PC-9 (cell line): ENCODE measurements at regions of chr14 and their contacts with region 1.

Region 1: DNA sequence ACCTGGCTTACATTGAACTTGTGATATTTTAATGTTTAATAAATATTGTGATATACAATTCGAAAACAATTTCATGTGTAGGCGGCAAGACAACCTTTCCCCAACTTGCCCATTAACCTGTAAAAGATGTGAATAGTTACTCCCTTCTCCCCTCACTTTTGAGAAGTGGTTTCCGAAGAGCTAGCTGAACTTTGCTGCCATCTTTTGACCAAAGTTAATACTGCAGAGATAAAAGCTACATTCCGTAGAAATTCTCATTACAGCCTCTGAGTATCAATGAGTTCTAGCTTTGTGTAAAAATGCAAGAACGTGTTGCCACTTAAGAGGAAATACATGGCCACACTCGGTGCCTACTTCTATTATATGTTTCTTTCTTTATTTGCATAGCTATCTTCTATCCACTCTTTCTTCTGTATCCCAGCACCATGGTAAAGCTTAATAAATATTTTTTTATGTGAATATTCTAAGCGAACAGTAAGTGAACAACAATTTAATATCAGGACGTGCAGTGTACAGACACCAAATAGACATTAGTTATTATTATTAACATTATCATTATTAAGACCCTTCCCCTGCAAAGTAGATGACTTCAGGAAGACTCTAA is 105.1 kb upstream of the TMEM260 start:
- DNase-seq: peak in 1 of 2 experiments; percentile 37
- H3K4me3 ChIP-seq: no peak overlapping the region
- H3K27ac ChIP-seq: no peak overlapping the region
- H3K4me1 ChIP-seq: no peaks in the 10 kb centered on the region
- H3K27me3 ChIP-seq: no peaks in the 10 kb centered on the region
- CTCF ChIP-seq: peak; percentile 83

Region 2: DNA sequence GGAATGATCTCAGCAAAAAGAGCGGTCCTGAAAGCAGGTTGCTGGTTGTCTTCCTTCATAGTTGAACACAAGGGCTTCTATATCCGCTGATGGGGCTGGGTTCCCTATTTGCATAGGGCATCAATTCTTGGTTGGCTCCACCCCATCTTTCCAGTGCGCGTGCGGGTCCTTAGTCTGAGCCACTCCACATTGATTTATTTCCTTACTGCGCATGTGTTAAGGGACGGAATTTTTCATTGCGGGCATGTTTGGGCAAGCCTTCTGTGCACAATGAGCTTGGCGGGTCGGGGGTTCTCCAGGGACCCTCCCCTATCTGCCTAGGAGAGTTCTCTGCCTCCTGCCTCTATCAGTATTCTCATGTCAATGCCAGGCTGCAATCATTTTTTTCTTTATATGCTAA is 1261.9 kb before region 1 on chr14:
- CTCF ChIA-PET with region 1: interaction called, 5 read pairs
- POLR2A ChIA-PET with region 1: no interaction called
- intact Hi-C with region 1: loop called (anchors 2 kb)
- DNase-seq: no peak
- H3K4me3 ChIP-seq: no peak overlapping the region
- H3K27ac ChIP-seq: no peak overlapping the region
- H3K4me1 ChIP-seq: no peaks in the 10 kb centered on the region
- H3K27me3 ChIP-seq: no peaks in the 10 kb centered on the region
- CTCF ChIP-seq: no peak

Region 3: DNA sequence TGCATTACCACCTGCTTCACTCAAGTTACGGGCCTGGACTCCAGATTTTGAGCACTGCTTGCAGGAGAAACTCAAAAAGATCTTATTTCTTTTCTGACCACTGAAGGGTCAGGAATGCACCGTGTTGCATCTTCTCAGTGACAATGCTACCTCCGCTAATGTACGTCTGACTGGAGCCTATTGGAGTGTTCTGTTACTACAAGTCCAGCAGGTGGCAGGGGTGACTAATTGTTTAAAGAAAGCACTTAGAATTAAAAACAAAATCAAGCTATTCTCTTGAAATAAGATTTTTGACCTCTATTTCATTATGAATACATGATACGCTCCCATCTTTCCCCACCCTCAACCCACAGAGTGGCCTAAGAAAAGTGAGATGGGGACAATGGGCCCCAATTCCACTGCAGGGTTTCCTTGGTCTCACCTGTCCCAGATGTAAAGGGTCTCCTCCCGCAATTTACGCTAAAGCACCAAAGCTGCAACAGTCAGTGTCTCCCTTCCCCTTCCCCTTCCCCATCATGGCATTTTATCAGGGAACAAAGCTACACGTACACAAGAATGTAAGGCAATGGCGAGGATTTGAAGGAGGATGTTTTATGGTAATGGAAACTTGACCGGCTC is 1036.3 kb before region 1 on chr14:
- CTCF ChIA-PET with region 1: interaction called, 7 read pairs
- POLR2A ChIA-PET with region 1: no interaction called
- intact Hi-C with region 1: loop called (anchors 1 kb)
- DNase-seq: peak in 1 of 2 experiments; percentile 66
- H3K4me3 ChIP-seq: no peak overlapping the region
- H3K27ac ChIP-seq: no peak overlapping the region
- H3K4me1 ChIP-seq: peaks cover 20% of the 10 kb centered on the region
- H3K27me3 ChIP-seq: no peaks in the 10 kb centered on the region
- CTCF ChIP-seq: peak; percentile 76

Region 4: GRCh38 chr14:55707365-55707804 is 767.1 kb before region 1 on chr14:
- CTCF ChIA-PET with region 1: no interaction called
- POLR2A ChIA-PET with region 1: no interaction called
- intact Hi-C with region 1: loop called (anchors 2 kb)
- DNase-seq: peak in 1 of 2 experiments; percentile 60
- H3K4me3 ChIP-seq: no peak overlapping the region
- H3K27ac ChIP-seq: no peak overlapping the region
- H3K4me1 ChIP-seq: no peaks in the 10 kb centered on the region
- H3K27me3 ChIP-seq: no peaks in the 10 kb centered on the region
- CTCF ChIP-seq: peak; percentile 81

Region 5: DNA sequence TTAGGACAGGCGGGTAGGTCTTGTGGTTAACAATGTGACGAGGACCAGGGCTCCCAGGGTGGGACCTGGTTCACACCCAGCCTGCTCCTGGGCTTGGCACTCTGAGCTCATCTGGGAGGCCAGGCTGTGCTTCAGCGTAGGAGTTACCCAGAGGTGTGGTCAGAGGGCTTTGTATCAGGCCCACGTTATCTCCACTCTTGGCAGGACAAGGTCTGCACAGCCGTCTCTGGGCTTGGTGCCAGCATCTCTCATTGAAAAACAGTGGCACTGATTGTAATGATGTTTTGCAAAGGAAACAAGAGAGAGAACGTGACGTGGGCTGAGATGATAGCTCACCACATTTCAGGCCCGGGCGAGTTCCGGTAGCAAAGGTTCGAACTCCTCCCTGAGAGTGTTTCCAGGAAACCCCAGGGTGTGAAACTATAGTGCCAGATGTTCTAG is 667.4 kb before region 1 on chr14:
- CTCF ChIA-PET with region 1: no interaction called
- POLR2A ChIA-PET with region 1: no interaction called
- intact Hi-C with region 1: loop called (anchors 10 kb)
- DNase-seq: peak; percentile 49 to 83
- H3K4me3 ChIP-seq: no peak overlapping the region
- H3K27ac ChIP-seq: no peak overlapping the region
- H3K4me1 ChIP-seq: peaks cover 23% of the 10 kb centered on the region
- H3K27me3 ChIP-seq: no peaks in the 10 kb centered on the region
- CTCF ChIP-seq: no peak

Region 6: GRCh38 chr14:56057071-56057741 is 417.3 kb before region 1 on chr14:
- CTCF ChIA-PET with region 1: interaction called, 16 read pairs
- POLR2A ChIA-PET with region 1: no interaction called
- intact Hi-C with region 1: no loop called
- DNase-seq: no peak
- H3K4me3 ChIP-seq: no peak overlapping the region
- H3K27ac ChIP-seq: no peak overlapping the region
- H3K4me1 ChIP-seq: no peaks in the 10 kb centered on the region
- H3K27me3 ChIP-seq: peaks cover 15% of the 10 kb centered on the region; the same call in 1 of the 2 replicates
- CTCF ChIP-seq: no peak

Region 7: DNA sequence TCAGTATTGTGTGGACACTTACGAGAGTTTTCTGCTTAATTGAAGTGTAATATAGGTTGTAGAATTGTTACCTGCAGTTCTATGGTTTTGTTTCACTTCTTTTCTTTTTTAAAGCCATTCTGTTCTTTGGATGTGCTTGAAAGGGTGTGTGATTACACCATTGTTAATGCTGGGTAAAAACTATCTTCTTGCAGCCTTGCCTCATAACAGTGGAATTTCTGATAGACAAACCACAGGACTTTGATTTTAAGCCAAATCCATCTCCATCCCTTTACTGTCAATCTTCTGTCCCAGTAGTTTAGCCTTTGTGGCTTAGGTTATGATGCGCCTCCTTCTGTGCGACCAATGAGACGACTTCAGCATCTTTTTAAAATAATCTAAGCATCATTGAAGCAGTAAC is 174.0 kb before region 1 on chr14:
- CTCF ChIA-PET with region 1: interaction called, 12 read pairs
- POLR2A ChIA-PET with region 1: no interaction called
- intact Hi-C with region 1: no loop called
- DNase-seq: no peak
- H3K4me3 ChIP-seq: no peak overlapping the region
- H3K27ac ChIP-seq: no peak overlapping the region
- H3K4me1 ChIP-seq: no peaks in the 10 kb centered on the region
- H3K27me3 ChIP-seq: no peaks in the 10 kb centered on the region
- CTCF ChIP-seq: no peak